ENCODE measurements at regions of chr4 and their contacts with region 1.

Region 1: DNA sequence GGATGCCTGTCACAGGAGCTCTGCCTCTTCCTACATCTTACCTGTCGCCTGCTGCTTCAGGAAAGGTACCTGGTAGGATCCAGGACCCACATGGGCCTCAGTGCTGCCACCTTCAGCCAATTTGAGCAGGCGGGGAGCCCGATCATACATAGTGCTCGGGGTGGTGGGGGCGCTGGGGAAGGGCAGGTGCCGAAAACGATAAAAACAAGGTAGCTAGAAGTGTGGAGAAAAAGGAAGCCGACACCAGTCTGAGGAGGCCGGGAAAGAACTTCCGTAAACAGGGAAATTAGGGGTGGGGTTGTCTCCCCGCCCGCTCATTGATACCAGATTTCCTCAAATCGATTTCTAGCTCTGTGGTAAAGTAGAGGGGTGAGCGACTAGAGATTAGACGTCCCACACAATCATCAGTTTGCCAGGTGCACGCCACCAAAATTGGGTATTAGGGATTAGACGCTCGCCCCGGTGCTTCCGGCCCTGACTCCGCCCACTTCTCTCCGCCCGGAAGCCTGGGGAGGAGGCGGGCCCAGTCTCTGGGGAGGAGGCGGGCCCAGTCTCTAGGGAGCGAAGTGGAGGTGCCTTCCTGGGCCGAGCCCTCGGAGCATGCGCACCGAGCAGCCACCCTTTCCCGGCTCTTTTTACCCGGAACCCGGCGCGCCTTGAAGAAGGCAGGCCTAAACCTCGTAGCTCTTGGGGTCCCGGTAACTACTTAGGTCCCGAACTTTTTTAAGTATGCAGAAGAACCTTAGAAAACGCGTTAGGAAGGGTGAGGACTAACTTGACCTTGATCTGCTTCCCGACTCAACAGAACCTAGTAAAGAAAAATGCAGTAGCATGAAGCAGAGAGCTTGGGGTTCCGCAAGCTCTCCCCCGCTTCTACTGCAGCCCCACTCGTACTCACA is at the start of gene STPG2:
- DNase-seq: peak; percentile 85 to 93 (median 91)
- ATAC-seq: peak; percentile 100
- H3K4me3 ChIP-seq: peak within 1 kb of the TSS; percentile 85
- H3K4me3 Mint-ChIP-seq: peak within 1 kb of the TSS; percentile 87 to 99 (median 94)
- H3K27ac ChIP-seq: peak within 1 kb of the TSS; percentile 84
- H3K27ac Mint-ChIP-seq: peak within 1 kb of the TSS; percentile 96 to 99 (median 98)
- H3K4me1 ChIP-seq: peaks cover 6 to 10% of the 10 kb centered on the region in 2 donors
- H3K4me1 Mint-ChIP-seq: peaks cover 12 to 28% (median 24%) of the 10 kb centered on the region in 7 donors
- H3K27me3 ChIP-seq: no peaks in the 10 kb centered on the region
- H3K27me3 Mint-ChIP-seq: peaks cover 0 to 16% (median 0%) of the 10 kb centered on the region in 5 donors
- total RNA-seq, gene STPG2: 0.19 to 0.47 (median 0.30) TPM in 4 of 5 experiments, not detected in the other

Region 2: GRCh38 chr4:98260579-98261290 is 117.5 kb after region 1 on chr4:
- CTCF ChIA-PET with region 1: interaction called, 3 read pairs
- POLR2A ChIA-PET with region 1: interaction called, 27 read pairs
- intact Hi-C with region 1: loop called (anchors 1 kb)
- DNase-seq: peak in 6 of 9 donors; percentile 69 to 95 (median 78)
- ATAC-seq: peak; percentile 85
- H3K4me3 ChIP-seq: peak overlapping the region; percentile 90
- H3K4me3 Mint-ChIP-seq: peak overlapping the region; percentile 92 to 98 (median 94)
- H3K27ac ChIP-seq: peak overlapping the region; percentile 86
- H3K27ac Mint-ChIP-seq: peak overlapping the region; percentile 84 to 97 (median 92)
- H3K4me1 ChIP-seq: peaks cover 5 to 12% of the 10 kb centered on the region in 2 donors
- H3K4me1 Mint-ChIP-seq: peaks cover 31 to 60% (median 54%) of the 10 kb centered on the region in 7 donors
- H3K27me3 ChIP-seq: no peaks in the 10 kb centered on the region
- H3K27me3 Mint-ChIP-seq: no peaks in the 10 kb centered on the region

Region 3: GRCh38 chr4:98446499-98447375 is 303.5 kb after region 1 on chr4:
- CTCF ChIA-PET with region 1: no interaction called
- POLR2A ChIA-PET with region 1: no interaction called
- intact Hi-C with region 1: loop called (anchors 2 to 5 kb)
- DNase-seq: peak in 7 of 9 donors; percentile 23 to 53 (median 42)
- ATAC-seq: peak; percentile 89
- H3K4me3 ChIP-seq: peak overlapping the region; percentile 9
- H3K4me3 Mint-ChIP-seq: peak overlapping the region; percentile 49 to 75 (median 71)
- H3K27ac ChIP-seq: no peak overlapping the region
- H3K27ac Mint-ChIP-seq: peak overlapping the region; percentile 52 to 88 (median 76)
- H3K4me1 ChIP-seq: peaks cover 30 to 39% of the 10 kb centered on the region in 2 donors
- H3K4me1 Mint-ChIP-seq: peaks cover 33 to 44% (median 37%) of the 10 kb centered on the region in 7 donors
- H3K27me3 ChIP-seq: no peaks in the 10 kb centered on the region
- H3K27me3 Mint-ChIP-seq: no peaks in the 10 kb centered on the region

Region 4: DNA sequence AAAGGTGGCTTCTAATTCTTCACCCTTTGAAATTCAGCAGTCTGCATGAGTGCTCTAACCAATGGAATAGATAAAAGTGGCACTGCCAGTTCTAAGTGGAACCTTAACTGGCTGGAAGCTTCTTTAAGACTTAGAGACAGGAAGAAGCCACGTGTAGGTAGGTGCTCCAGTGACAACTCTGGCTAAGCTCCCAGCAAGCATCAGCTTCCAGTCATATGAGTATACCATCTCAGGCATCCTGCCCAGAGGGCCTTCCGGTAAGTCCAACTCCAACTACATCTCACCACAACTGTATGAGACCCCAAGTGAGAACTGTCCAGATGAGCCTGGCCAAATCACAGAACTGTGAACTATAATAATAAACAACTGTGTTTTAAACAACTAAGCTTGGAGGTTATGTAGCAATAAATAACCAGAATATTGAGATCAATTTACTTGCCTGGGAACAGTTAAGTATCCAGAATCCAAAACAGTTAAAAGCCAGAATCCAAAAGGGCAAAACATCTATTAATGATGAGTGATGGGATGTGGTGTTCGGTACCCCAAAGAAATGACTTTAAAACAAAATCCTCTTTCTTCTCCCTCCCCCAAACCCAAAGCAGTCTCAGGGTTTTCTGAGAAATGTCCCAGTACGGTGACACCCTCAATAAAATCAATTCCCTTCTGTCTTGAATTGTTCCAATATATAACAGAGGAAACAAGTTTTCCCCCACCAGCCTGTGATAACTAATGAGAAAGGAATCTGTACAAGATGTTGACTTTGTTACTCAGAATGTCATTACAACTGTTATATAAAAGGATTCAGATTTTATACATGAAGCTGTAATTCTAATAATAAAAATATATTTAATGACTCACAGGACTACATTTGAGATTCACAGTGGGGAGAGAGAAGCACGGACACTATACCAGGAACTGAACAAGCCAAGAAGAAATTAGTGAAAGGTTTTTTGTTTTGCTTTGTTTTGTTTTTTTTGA is 510.9 kb after region 1 on chr4:
- CTCF ChIA-PET with region 1: no interaction called
- POLR2A ChIA-PET with region 1: no interaction called
- intact Hi-C with region 1: no loop called
- DNase-seq: no peak
- ATAC-seq: no peak
- H3K4me3 ChIP-seq: no peak overlapping the region
- H3K4me3 Mint-ChIP-seq: peak overlapping the region in 1 of 10 donors; percentile 18
- H3K27ac ChIP-seq: no peak overlapping the region
- H3K27ac Mint-ChIP-seq: peak overlapping the region in 2 of 9 donors; percentile 1 to 66
- H3K4me1 ChIP-seq: peaks cover 10 to 22% of the 10 kb centered on the region in 2 donors
- H3K4me1 Mint-ChIP-seq: peaks cover 37 to 61% (median 54%) of the 10 kb centered on the region in 7 donors
- H3K27me3 ChIP-seq: no peaks in the 10 kb centered on the region
- H3K27me3 Mint-ChIP-seq: no peaks in the 10 kb centered on the region

Region 5: GRCh38 chr4:98706200-98706813 is 563.1 kb after region 1 on chr4:
- CTCF ChIA-PET with region 1: no interaction called
- POLR2A ChIA-PET with region 1: no interaction called
- intact Hi-C with region 1: loop called in 1 of 2 experiments (anchors 5 kb)
- DNase-seq: peak in 7 of 9 donors; percentile 21 to 76 (median 71)
- ATAC-seq: peak; percentile 96
- H3K4me3 ChIP-seq: peak overlapping the region; percentile 37
- H3K4me3 Mint-ChIP-seq: peak overlapping the region; percentile 74 to 87 (median 80)
- H3K27ac ChIP-seq: no peak overlapping the region
- H3K27ac Mint-ChIP-seq: peak overlapping the region; percentile 40 to 93 (median 81)
- H3K4me1 ChIP-seq: peaks cover 29 to 30% of the 10 kb centered on the region in 2 donors
- H3K4me1 Mint-ChIP-seq: peaks cover 24 to 50% (median 41%) of the 10 kb centered on the region in 7 donors
- H3K27me3 ChIP-seq: no peaks in the 10 kb centered on the region
- H3K27me3 Mint-ChIP-seq: no peaks in the 10 kb centered on the region

Region 6: GRCh38 chr4:99088481-99089365 is 945.5 kb after region 1 on chr4 and contains the start of gene ADH5:
- CTCF ChIA-PET with region 1: interaction called, 4 read pairs
- POLR2A ChIA-PET with region 1: interaction called, 16 read pairs
- intact Hi-C with region 1: loop called (anchors 1 kb)
- DNase-seq: peak; percentile 75 to 90 (median 85)
- ATAC-seq: peak; percentile 98
- H3K4me3 ChIP-seq: peak within 1 kb of the TSS; percentile 98
- H3K4me3 Mint-ChIP-seq: peak within 1 kb of the TSS; percentile 93 to 99 (median 98)
- H3K27ac ChIP-seq: peak within 1 kb of the TSS; percentile 85
- H3K27ac Mint-ChIP-seq: peak within 1 kb of the TSS; percentile 94 to 99 (median 98)
- H3K4me1 ChIP-seq: peaks cover 8 to 9% of the 10 kb centered on the region in 2 donors
- H3K4me1 Mint-ChIP-seq: peaks cover 28 to 67% (median 57%) of the 10 kb centered on the region in 7 donors
- H3K27me3 ChIP-seq: no peaks in the 10 kb centered on the region
- H3K27me3 Mint-ChIP-seq: peaks cover 0 to 11% (median 0%) of the 10 kb centered on the region in 5 donors
- total RNA-seq, gene ADH5: 42.7 to 102 (median 74.0) TPM

Region 7: GRCh38 chr4:99504804-99505569 is 1361.7 kb after region 1 on chr4:
- CTCF ChIA-PET with region 1: no interaction called
- POLR2A ChIA-PET with region 1: no interaction called
- intact Hi-C with region 1: loop called in 1 of 2 experiments (anchors 5 kb)
- DNase-seq: no peak
- ATAC-seq: no peak
- H3K4me3 ChIP-seq: no peak overlapping the region
- H3K4me3 Mint-ChIP-seq: peak overlapping the region in 3 of 10 donors; percentile 14 to 76 (median 56)
- H3K27ac ChIP-seq: no peak overlapping the region
- H3K27ac Mint-ChIP-seq: peak overlapping the region in 8 of 9 donors; percentile 14 to 91 (median 40)
- H3K4me1 ChIP-seq: peaks cover 8 to 33% of the 10 kb centered on the region in 2 donors
- H3K4me1 Mint-ChIP-seq: peaks cover 31 to 63% (median 57%) of the 10 kb centered on the region in 7 donors
- H3K27me3 ChIP-seq: no peaks in the 10 kb centered on the region
- H3K27me3 Mint-ChIP-seq: peaks cover 0 to 2% (median 0%) of the 10 kb centered on the region in 5 donors

Region 8: GRCh38 chr4:99894161-99894997 is 1751.1 kb after region 1 on chr4 and contains the start of gene LAMTOR3:
- CTCF ChIA-PET with region 1: no interaction called
- POLR2A ChIA-PET with region 1: interaction called, 6 read pairs
- intact Hi-C with region 1: loop called in 1 of 2 experiments (anchors 1 kb)
- DNase-seq: peak; percentile 70 to 92 (median 89)
- ATAC-seq: peak; percentile 98
- H3K4me3 ChIP-seq: peak within 1 kb of the TSS; percentile 92
- H3K4me3 Mint-ChIP-seq: peak within 1 kb of the TSS; percentile 96 to 99 (median 98)
- H3K27ac ChIP-seq: peak within 1 kb of the TSS; percentile 96
- H3K27ac Mint-ChIP-seq: peak within 1 kb of the TSS; percentile 96 to 99 (median 98)
- H3K4me1 ChIP-seq: peaks cover 13 to 25% of the 10 kb centered on the region in 2 donors
- H3K4me1 Mint-ChIP-seq: peaks cover 25 to 55% (median 52%) of the 10 kb centered on the region in 7 donors
- H3K27me3 ChIP-seq: no peaks in the 10 kb centered on the region
- H3K27me3 Mint-ChIP-seq: no peaks in the 10 kb centered on the region
- total RNA-seq, gene LAMTOR3: 20.1 to 32.6 (median 27.4) TPM

Measured in naive thymus-derived CD4-positive, alpha-beta T cell (primary cell).